Heart left ventricle (tissue), 16 donors: ENCODE measurements at regions of chr2 and their contacts with region 1.

Region 1: DNA sequence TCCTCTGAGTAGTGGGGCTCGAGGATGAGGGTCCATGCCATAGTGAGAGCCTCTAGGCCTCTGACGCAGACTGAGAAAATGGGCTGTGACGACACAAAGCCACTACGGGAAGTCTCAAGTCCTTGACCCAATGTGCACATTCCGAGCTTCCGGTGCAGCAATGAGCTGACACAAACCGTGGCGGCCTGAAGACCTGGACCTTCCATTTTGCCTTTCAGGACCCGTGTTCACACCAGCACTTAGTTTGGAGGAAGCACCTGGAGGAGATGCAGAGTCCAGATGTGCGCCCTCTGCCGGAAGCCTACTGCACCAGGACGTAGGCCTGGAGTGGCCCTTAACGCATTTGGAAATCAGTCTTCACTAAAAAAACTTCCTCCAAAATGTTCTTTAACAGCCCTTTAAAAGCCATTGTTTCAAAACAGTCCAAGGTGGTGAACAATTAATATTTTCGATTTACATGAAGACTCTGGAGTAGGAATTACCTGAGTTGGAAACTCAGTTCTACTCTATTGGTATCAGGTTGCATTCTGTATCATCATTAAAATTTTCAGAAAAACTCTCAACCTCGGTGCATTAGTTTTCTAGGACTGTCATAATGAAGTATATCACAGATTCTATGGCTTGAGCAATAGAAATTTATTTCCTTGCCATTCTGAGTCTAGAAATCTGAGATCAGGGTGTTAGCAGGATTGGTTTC is 33.9 kb downstream of the BMP10 start:
- DNase-seq: peak; percentile 68 to 81 (median 75)
- ATAC-seq: peak in 3 of 4 donors; percentile 56 to 67 (median 66)
- H3K4me3 ChIP-seq: no peak overlapping the region
- H3K27ac ChIP-seq: no peak overlapping the region
- H3K4me1 ChIP-seq: peaks cover 0 to 53% (median 9%) of the 10 kb centered on the region in 12 donors
- H3K27me3 ChIP-seq: no peaks in the 10 kb centered on the region
- CTCF ChIP-seq: peak; percentile 52 to 78 (median 67)
- POLR2A ChIP-seq: no peak

Region 2: DNA sequence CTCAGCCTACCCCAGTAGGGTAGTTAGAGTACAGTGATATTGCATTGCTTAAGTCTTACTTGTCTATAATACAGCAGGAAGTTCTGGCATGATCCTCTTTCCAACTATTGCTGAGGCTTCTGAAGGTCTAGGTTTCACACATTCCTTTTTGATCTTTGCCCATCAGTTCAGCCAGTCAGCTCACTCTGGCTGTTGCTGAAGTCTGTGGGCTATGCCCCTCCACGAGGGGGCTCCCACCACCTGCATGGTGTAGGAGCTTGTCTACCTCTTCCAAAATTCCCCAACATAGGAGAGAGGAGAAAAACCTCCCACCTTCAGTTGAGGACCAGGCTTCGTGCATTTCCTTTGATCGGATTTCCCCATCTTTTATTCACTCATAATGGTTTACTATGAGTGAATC is 167.7 kb before region 1 on chr2:
- intact Hi-C with region 1: no loop called
- DNase-seq: no peak
- ATAC-seq: no peak
- H3K4me3 ChIP-seq: no peak overlapping the region
- H3K27ac ChIP-seq: no peak overlapping the region
- H3K4me1 ChIP-seq: no peaks in the 10 kb centered on the region
- H3K27me3 ChIP-seq: peaks cover 0 to 11% (median 0%) of the 10 kb centered on the region in 9 donors
- CTCF ChIP-seq: no peak
- POLR2A ChIP-seq: no peak

Region 3: GRCh38 chr2:68909793-68910674 is 72.7 kb after region 1 on chr2:
- intact Hi-C with region 1: loop called in 3 of 10 experiments (anchors 5 kb)
- DNase-seq: peak in 4 of 5 donors; percentile 46 to 68 (median 63)
- ATAC-seq: peak in 3 of 4 donors; percentile 66 to 76 (median 74)
- H3K4me3 ChIP-seq: no peak overlapping the region
- H3K27ac ChIP-seq: no peak overlapping the region
- H3K4me1 ChIP-seq: peaks cover 0 to 54% (median 8%) of the 10 kb centered on the region in 12 donors
- H3K27me3 ChIP-seq: no peaks in the 10 kb centered on the region
- CTCF ChIP-seq: peak; percentile 86 to 95 (median 93)
- POLR2A ChIP-seq: no peak